WTC11 (cell line): ENCODE measurements at regions of chr12 and their contacts with region 1.

Region 1: DNA sequence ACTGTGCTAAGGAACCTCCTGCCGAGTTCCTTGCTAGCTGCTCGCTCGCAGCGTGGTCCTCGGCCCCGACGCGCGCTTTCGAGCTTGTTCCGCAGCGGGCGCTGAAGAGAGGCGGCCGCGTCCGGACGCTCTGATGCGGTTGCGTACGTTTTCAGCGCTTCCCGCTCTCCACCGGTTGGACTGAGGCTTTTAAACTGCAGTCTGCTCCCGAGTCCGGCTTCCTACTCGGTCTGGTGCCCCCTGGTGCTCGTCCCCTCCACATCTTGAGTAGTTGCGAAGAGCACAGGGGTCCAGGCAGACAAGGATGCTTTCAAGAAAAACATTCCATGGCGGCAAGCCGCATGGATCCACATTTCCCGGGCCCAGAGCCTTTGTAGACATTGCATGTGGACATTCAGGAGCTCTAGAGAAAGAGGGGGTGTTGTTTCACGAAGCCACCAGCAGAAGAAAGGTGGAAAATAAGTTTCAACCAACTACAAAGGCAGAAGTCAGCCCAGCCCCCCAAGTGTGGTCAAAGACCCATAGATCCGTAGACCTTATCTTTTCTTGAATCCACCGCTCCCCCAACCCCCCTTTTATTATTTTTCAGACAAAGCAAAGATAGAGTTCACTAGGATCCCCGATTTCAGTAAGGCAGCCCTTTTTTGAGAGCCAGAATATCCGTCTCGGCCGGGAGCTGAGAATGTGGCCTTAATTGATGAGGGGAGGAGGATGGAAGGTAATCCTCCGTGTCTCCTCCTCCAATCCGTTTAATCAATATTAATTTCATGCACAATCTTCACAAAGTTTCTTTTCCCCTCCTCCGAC is 984 bp upstream of the WNK1 start:
- DNase-seq: peak; percentile 94
- ATAC-seq: peak; percentile 65
- H3K4me3 Mint-ChIP-seq: no peak overlapping the region
- H3K27ac Mint-ChIP-seq: no peak overlapping the region
- H3K4me1 Mint-ChIP-seq: peaks cover 25% of the 10 kb centered on the region
- H3K27me3 Mint-ChIP-seq: no peaks in the 10 kb centered on the region
- CTCF ChIP-seq: 0 out of 2 replicates have a peak, but pooled peaks have one; percentile 40

Region 2: GRCh38 chr12:569803-570434 is 181.5 kb before region 1 on chr12:
- CTCF ChIA-PET with region 1: interaction called, 63 read pairs
- POLR2A ChIA-PET with region 1: interaction called, 7 read pairs
- DNase-seq: peak; percentile 88
- ATAC-seq: peak; percentile 73
- H3K4me3 Mint-ChIP-seq: peak overlapping the region; percentile 79
- H3K27ac Mint-ChIP-seq: no peak overlapping the region
- H3K4me1 Mint-ChIP-seq: peaks cover 10% of the 10 kb centered on the region
- H3K27me3 Mint-ChIP-seq: peaks cover 15% of the 10 kb centered on the region
- CTCF ChIP-seq: peak; percentile 72

Region 3: GRCh38 chr12:614411-614970 is 136.9 kb before region 1 on chr12:
- CTCF ChIA-PET with region 1: interaction called, 20 read pairs
- POLR2A ChIA-PET with region 1: interaction called, 4 read pairs
- DNase-seq: peak; percentile 41
- ATAC-seq: peak; percentile 78
- H3K4me3 Mint-ChIP-seq: no peak overlapping the region
- H3K27ac Mint-ChIP-seq: no peak overlapping the region; the same call in 1 of the 2 replicates
- H3K4me1 Mint-ChIP-seq: peaks cover 9% of the 10 kb centered on the region; the same call in 1 of the 2 replicates
- H3K27me3 Mint-ChIP-seq: no peaks in the 10 kb centered on the region; the same call in 1 of the 2 replicates
- CTCF ChIP-seq: no peak

Region 4: GRCh38 chr12:642633-643474 is 108.5 kb before region 1 on chr12:
- CTCF ChIA-PET with region 1: interaction called, 23 read pairs
- POLR2A ChIA-PET with region 1: no interaction called
- DNase-seq: peak; percentile 71
- ATAC-seq: peak; percentile 79
- H3K4me3 Mint-ChIP-seq: peak overlapping the region; percentile 66
- H3K27ac Mint-ChIP-seq: no peak overlapping the region
- H3K4me1 Mint-ChIP-seq: peaks cover 7% of the 10 kb centered on the region
- H3K27me3 Mint-ChIP-seq: no peaks in the 10 kb centered on the region
- CTCF ChIP-seq: 0 out of 2 replicates have a peak, but pooled peaks have one; percentile 11

Region 5: DNA sequence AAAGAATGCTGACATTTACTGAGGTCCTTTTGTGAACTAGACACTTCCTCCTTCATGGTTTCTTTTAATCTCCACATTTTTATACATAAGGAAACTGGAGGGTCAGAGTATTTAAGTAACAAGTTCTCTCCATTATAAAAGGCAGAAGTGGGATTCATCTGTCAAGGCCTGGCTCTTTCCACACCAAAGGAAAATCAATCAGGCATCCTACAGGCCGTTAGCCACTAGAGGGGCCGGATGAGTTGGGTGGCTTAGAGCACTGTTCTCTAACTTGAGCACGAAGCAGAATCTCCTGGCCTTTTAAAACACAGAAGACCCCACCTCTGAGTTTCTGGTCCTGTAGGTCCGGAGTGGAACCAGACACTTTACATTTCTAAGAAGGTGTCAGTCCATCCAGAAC is 51.3 kb before region 1 on chr12:
- CTCF ChIA-PET with region 1: interaction called, 17 read pairs
- POLR2A ChIA-PET with region 1: interaction called, 6 read pairs
- DNase-seq: no peak
- ATAC-seq: peak; percentile 80
- H3K4me3 Mint-ChIP-seq: no peak overlapping the region
- H3K27ac Mint-ChIP-seq: no peak overlapping the region
- H3K4me1 Mint-ChIP-seq: peaks cover 17% of the 10 kb centered on the region
- H3K27me3 Mint-ChIP-seq: peaks cover 6% of the 10 kb centered on the region; the same call in 1 of the 2 replicates
- CTCF ChIP-seq: no peak

Region 6: GRCh38 chr12:724194-724855 is 27.1 kb before region 1 on chr12:
- CTCF ChIA-PET with region 1: interaction called, 14 read pairs
- POLR2A ChIA-PET with region 1: interaction called, 17 read pairs
- DNase-seq: no peak
- ATAC-seq: peak; percentile 82
- H3K4me3 Mint-ChIP-seq: no peak overlapping the region
- H3K27ac Mint-ChIP-seq: peak overlapping the region; percentile 52; the same call in 1 of the 2 replicates
- H3K4me1 Mint-ChIP-seq: peaks cover 40% of the 10 kb centered on the region
- H3K27me3 Mint-ChIP-seq: no peaks in the 10 kb centered on the region
- CTCF ChIP-seq: no peak

Region 7: GRCh38 chr12:835754-836518 is 84.5 kb after region 1 on chr12:
- CTCF ChIA-PET with region 1: no interaction called
- POLR2A ChIA-PET with region 1: no interaction called
- DNase-seq: no peak
- ATAC-seq: no peak
- H3K4me3 Mint-ChIP-seq: no peak overlapping the region
- H3K27ac Mint-ChIP-seq: no peak overlapping the region
- H3K4me1 Mint-ChIP-seq: no peaks in the 10 kb centered on the region
- H3K27me3 Mint-ChIP-seq: no peaks in the 10 kb centered on the region
- CTCF ChIP-seq: no peak